Adrenal gland (tissue), 19 donors: ENCODE measurements at regions of chrX and their contacts with region 1.

Region 1: DNA sequence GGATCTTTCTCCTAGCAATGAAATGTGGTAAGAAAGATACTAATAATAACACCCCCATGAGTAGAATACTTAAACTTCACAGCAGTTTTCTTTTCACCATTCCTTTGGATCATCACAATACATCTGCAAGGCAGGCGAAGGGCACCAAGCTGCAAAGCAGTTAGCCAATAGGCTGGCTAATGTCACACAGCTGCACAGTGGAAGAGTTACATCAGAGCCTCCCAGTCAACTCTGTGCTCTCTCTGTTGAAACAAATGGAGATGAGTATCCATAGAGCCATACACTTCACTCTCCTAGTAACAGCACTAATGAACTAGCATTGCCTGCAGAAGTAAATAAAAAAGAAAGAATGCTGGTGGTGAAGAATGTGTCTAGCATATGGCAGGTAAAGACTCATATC is 139.0 kb downstream of the ATG4A start:
- DNase-seq: no peak
- H3K4me3 ChIP-seq: no peak overlapping the region
- H3K27ac ChIP-seq: no peak overlapping the region
- H3K4me1 ChIP-seq: no peaks in the 10 kb centered on the region
- H3K27me3 ChIP-seq: peaks cover 5% of the 10 kb centered on the region
- CTCF ChIP-seq: no peak
- POLR2A ChIP-seq: no peak

Region 2: GRCh38 chrX:108018656-108019381 is 211.8 kb before region 1 on chrX:
- intact Hi-C with region 1: no loop called
- DNase-seq: no peak
- H3K4me3 ChIP-seq: no peak overlapping the region
- H3K27ac ChIP-seq: no peak overlapping the region
- H3K4me1 ChIP-seq: no peaks in the 10 kb centered on the region
- H3K27me3 ChIP-seq: peaks cover 4% of the 10 kb centered on the region
- CTCF ChIP-seq: no peak
- POLR2A ChIP-seq: no peak

Region 3: GRCh38 chrX:108049649-108050048 is 180.9 kb before region 1 on chrX:
- intact Hi-C with region 1: no loop called
- DNase-seq: no peak
- H3K4me3 ChIP-seq: no peak overlapping the region
- H3K27ac ChIP-seq: no peak overlapping the region
- H3K4me1 ChIP-seq: no peaks in the 10 kb centered on the region
- H3K27me3 ChIP-seq: peaks cover 9% of the 10 kb centered on the region
- CTCF ChIP-seq: no peak
- POLR2A ChIP-seq: no peak

Region 4: GRCh38 chrX:108527724-108528123 is 297.1 kb after region 1 on chrX:
- intact Hi-C with region 1: loop called in 1 of 2 experiments (anchors 10 kb)
- DNase-seq: no peak
- H3K4me3 ChIP-seq: no peak overlapping the region
- H3K27ac ChIP-seq: no peak overlapping the region
- H3K4me1 ChIP-seq: no peaks in the 10 kb centered on the region
- H3K27me3 ChIP-seq: peaks cover 14% of the 10 kb centered on the region
- CTCF ChIP-seq: no peak
- POLR2A ChIP-seq: no peak